Naive thymus-derived CD4-positive, alpha-beta T cell (primary cell): ENCODE measurements at regions of chr1 and their contacts with region 1.

Region 1: DNA sequence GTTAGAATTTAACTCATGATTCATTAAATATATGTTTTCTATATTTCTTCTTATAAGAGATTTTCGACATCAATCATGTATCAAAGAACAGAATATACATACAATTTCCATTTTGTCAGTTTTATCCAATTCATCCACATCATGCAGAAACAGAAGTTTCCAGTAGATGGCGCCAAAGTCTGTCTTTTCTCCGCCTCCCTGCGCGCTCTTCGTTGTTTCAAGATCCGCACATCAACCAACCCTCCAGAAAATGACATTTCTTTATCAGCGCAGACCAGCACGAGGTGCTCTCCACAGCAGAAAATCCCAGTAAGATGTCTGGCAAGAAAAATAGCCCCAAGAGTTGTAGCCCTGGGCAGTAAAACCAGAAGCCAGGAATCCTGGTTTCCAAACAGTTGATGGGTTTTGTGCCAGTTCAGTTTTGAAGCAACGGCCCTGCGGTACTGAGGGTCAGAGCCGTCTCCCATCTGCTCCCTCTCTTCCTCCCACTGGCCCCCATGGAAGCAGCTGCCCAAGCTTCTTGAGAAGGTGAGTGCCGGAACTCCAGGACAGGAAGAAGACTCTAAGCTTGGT is 38.6 kb upstream of the GPR137B start:
- DNase-seq: peak; percentile 26 to 69 (median 51)
- ATAC-seq: peak; percentile 74
- H3K4me3 ChIP-seq: no peak overlapping the region
- H3K4me3 Mint-ChIP-seq: peak overlapping the region in 1 of 10 donors; percentile 12
- H3K27ac ChIP-seq: no peak overlapping the region
- H3K27ac Mint-ChIP-seq: no peak overlapping the region
- H3K4me1 ChIP-seq: no peaks in the 10 kb centered on the region
- H3K4me1 Mint-ChIP-seq: peaks cover 0 to 9% (median 3%) of the 10 kb centered on the region in 7 donors
- H3K27me3 ChIP-seq: no peaks in the 10 kb centered on the region
- H3K27me3 Mint-ChIP-seq: peaks cover 0 to 4% (median 0%) of the 10 kb centered on the region in 5 donors

Region 2: DNA sequence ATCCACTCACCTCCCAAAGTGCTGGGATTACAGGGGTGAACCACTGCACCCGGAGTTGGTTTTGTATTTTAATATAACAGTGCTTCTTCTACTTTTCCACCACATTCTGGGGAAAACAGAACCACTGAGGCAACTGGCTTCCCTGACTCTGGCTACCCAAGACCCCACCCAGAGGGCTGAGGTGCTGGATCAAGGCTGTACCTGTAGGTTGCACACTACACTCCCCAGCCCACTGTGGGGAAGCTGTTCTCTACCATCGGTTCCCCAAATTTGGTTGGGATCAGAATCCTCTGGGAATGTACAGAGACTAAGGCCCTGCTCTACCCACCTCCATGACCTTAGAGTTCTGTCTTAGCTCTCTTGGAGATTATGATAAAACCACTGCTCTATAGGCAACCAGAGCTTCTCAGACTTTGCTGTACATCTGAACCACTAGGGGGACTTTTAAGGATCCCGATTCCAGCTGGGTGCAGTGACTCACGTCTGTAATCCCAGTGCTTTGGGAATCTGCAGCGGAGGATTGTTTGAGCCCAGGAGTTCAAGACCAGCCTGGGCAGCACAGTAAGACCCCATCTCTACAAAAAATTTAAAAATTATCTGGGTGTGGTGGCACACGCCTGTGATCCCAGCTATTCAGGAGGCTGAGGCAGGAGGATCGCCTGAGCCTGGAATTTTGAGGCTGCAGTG is 505.7 kb before region 1 on chr1:
- CTCF ChIA-PET with region 1: no interaction called
- POLR2A ChIA-PET with region 1: no interaction called
- intact Hi-C with region 1: no loop called
- DNase-seq: no peak
- ATAC-seq: no peak
- H3K4me3 ChIP-seq: no peak overlapping the region
- H3K4me3 Mint-ChIP-seq: no peak overlapping the region
- H3K27ac ChIP-seq: no peak overlapping the region
- H3K27ac Mint-ChIP-seq: no peak overlapping the region
- H3K4me1 ChIP-seq: no peaks in the 10 kb centered on the region
- H3K4me1 Mint-ChIP-seq: peaks cover 0 to 9% (median 5%) of the 10 kb centered on the region in 7 donors
- H3K27me3 ChIP-seq: no peaks in the 10 kb centered on the region
- H3K27me3 Mint-ChIP-seq: peaks cover 0 to 19% (median 4%) of the 10 kb centered on the region in 5 donors

Region 3: GRCh38 chr1:236332092-236332758 is 228.5 kb after region 1 on chr1:
- CTCF ChIA-PET with region 1: no interaction called
- POLR2A ChIA-PET with region 1: no interaction called
- intact Hi-C with region 1: no loop called
- DNase-seq: no peak
- ATAC-seq: no peak
- H3K4me3 ChIP-seq: no peak overlapping the region
- H3K4me3 Mint-ChIP-seq: no peak overlapping the region
- H3K27ac ChIP-seq: no peak overlapping the region
- H3K27ac Mint-ChIP-seq: no peak overlapping the region
- H3K4me1 ChIP-seq: no peaks in the 10 kb centered on the region
- H3K4me1 Mint-ChIP-seq: no peaks in the 10 kb centered on the region
- H3K27me3 ChIP-seq: no peaks in the 10 kb centered on the region
- H3K27me3 Mint-ChIP-seq: peaks cover 0 to 3% (median 0%) of the 10 kb centered on the region in 5 donors

Region 4: DNA sequence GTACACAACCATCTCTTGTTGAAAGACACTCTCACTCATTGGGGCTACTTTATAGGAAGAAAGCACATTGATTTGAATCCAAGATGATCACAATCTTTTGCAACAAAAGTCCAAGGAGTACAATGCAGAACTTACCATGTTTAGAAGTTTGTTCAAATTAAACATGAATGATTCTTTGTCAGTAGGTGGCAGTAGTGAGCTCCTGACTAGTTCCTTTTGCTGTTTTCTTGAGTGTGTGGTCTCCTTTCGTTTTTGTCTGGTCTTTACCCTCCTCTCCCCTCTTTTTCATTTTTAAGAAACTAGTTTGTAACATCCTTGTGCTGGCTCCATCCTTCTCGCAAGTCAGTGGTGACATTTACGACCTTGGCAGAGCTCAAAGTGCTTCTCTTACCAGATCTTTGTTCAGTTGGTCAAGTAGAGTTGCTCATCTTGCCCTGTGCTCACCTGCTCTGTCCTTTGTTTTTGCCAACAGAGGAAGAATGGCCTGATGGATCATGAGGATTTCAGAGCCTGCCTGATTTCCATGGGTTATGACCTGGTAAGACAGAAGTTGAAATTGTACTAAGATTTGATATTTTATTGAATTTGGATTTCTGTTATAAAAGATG is 655.6 kb after region 1 on chr1:
- CTCF ChIA-PET with region 1: no interaction called
- POLR2A ChIA-PET with region 1: no interaction called
- intact Hi-C with region 1: loop called (anchors 5 kb)
- DNase-seq: peak in 6 of 9 donors; percentile 13 to 57 (median 42)
- ATAC-seq: peak; percentile 59
- H3K4me3 ChIP-seq: no peak overlapping the region
- H3K4me3 Mint-ChIP-seq: peak overlapping the region in 5 of 10 donors; percentile 5 to 66 (median 19)
- H3K27ac ChIP-seq: no peak overlapping the region
- H3K27ac Mint-ChIP-seq: peak overlapping the region in 1 of 9 donors; percentile 78
- H3K4me1 ChIP-seq: no peaks in the 10 kb centered on the region
- H3K4me1 Mint-ChIP-seq: peaks cover 0 to 5% (median 4%) of the 10 kb centered on the region in 7 donors
- H3K27me3 ChIP-seq: no peaks in the 10 kb centered on the region
- H3K27me3 Mint-ChIP-seq: peaks cover 0 to 10% (median 0%) of the 10 kb centered on the region in 5 donors

Region 5: GRCh38 chr1:236868625-236869467 is 765.1 kb after region 1 on chr1:
- CTCF ChIA-PET with region 1: no interaction called
- POLR2A ChIA-PET with region 1: no interaction called
- intact Hi-C with region 1: loop called (anchors 1 kb)
- DNase-seq: peak in 8 of 9 donors; percentile 14 to 58 (median 46)
- ATAC-seq: peak; percentile 73
- H3K4me3 ChIP-seq: no peak overlapping the region
- H3K4me3 Mint-ChIP-seq: no peak overlapping the region
- H3K27ac ChIP-seq: no peak overlapping the region
- H3K27ac Mint-ChIP-seq: peak overlapping the region in 1 of 9 donors; percentile 41
- H3K4me1 ChIP-seq: no peaks in the 10 kb centered on the region
- H3K4me1 Mint-ChIP-seq: peaks cover 0 to 16% (median 0%) of the 10 kb centered on the region in 7 donors
- H3K27me3 ChIP-seq: no peaks in the 10 kb centered on the region
- H3K27me3 Mint-ChIP-seq: no peaks in the 10 kb centered on the region

Region 6: GRCh38 chr1:237386362-237387143 is 1282.8 kb after region 1 on chr1:
- CTCF ChIA-PET with region 1: no interaction called
- POLR2A ChIA-PET with region 1: no interaction called
- intact Hi-C with region 1: loop called in 1 of 2 experiments (anchors 5 kb)
- DNase-seq: no peak
- ATAC-seq: no peak
- H3K4me3 ChIP-seq: no peak overlapping the region
- H3K4me3 Mint-ChIP-seq: no peak overlapping the region
- H3K27ac ChIP-seq: no peak overlapping the region
- H3K27ac Mint-ChIP-seq: no peak overlapping the region
- H3K4me1 ChIP-seq: no peaks in the 10 kb centered on the region
- H3K4me1 Mint-ChIP-seq: no peaks in the 10 kb centered on the region
- H3K27me3 ChIP-seq: no peaks in the 10 kb centered on the region
- H3K27me3 Mint-ChIP-seq: peaks cover 0 to 5% (median 2%) of the 10 kb centered on the region in 5 donors